IMR-90 (cell line): ENCODE measurements at regions of chr9 and their contacts with region 1.

Region 1: GRCh38 chr9:99647604-99648003 is 174.1 kb upstream of the NR4A3 start:
- DNase-seq: no peak
- ATAC-seq: no peak
- H3K4me3 ChIP-seq: no peak overlapping the region
- H3K27ac ChIP-seq: no peak overlapping the region
- H3K4me1 ChIP-seq: no peaks in the 10 kb centered on the region
- H3K27me3 ChIP-seq: peaks cover 7% of the 10 kb centered on the region
- CTCF ChIP-seq: no peak
- POLR2A ChIP-seq: no peak
- RAD21 ChIP-seq: no peak

Region 2: GRCh38 chr9:99690573-99690972 is 43.0 kb after region 1 on chr9:
- CTCF ChIA-PET with region 1: no interaction called
- POLR2A ChIA-PET with region 1: no interaction called
- dilution Hi-C with region 1: no loop called
- in situ Hi-C with region 1: no loop called
- intact Hi-C with region 1: loop called (anchors 5 kb)
- DNase-seq: no peak
- ATAC-seq: no peak
- H3K4me3 ChIP-seq: no peak overlapping the region
- H3K27ac ChIP-seq: no peak overlapping the region
- H3K4me1 ChIP-seq: no peaks in the 10 kb centered on the region
- H3K27me3 ChIP-seq: peaks cover 9% of the 10 kb centered on the region
- CTCF ChIP-seq: no peak
- POLR2A ChIP-seq: no peak
- RAD21 ChIP-seq: no peak

Region 3: DNA sequence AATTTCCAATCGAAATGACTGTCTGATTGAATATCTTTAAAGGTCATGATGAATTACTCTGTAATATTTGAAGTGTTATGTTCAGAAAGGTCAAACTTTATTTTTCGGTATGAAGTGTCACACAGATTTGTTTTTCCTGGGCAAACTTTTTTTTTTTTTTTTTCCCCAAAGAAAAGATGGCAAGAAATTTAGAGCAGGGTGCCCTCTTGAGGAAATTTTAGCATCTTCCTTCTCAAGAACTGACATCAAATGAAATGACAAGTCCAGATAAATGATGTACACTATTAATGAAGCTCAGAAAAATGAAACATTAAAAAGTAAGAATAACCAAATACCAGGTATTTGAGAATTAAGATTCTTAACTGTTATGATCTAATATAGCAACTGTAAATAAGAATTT is 575.1 kb after region 1 on chr9:
- CTCF ChIA-PET with region 1: no interaction called
- POLR2A ChIA-PET with region 1: no interaction called
- dilution Hi-C with region 1: no loop called
- in situ Hi-C with region 1: no loop called
- intact Hi-C with region 1: no loop called
- DNase-seq: peak; percentile 53
- ATAC-seq: 0 out of 2 replicates have a peak, but pooled peaks have one; percentile 27
- H3K4me3 ChIP-seq: no peak overlapping the region
- H3K27ac ChIP-seq: no peak overlapping the region
- H3K4me1 ChIP-seq: peaks cover 2% of the 10 kb centered on the region
- H3K27me3 ChIP-seq: no peaks in the 10 kb centered on the region
- CTCF ChIP-seq: peak; percentile 61
- POLR2A ChIP-seq: no peak
- RAD21 ChIP-seq: peak; percentile 64